ENCODE measurements at regions of chr7 and their contacts with region 1.

Region 1: DNA sequence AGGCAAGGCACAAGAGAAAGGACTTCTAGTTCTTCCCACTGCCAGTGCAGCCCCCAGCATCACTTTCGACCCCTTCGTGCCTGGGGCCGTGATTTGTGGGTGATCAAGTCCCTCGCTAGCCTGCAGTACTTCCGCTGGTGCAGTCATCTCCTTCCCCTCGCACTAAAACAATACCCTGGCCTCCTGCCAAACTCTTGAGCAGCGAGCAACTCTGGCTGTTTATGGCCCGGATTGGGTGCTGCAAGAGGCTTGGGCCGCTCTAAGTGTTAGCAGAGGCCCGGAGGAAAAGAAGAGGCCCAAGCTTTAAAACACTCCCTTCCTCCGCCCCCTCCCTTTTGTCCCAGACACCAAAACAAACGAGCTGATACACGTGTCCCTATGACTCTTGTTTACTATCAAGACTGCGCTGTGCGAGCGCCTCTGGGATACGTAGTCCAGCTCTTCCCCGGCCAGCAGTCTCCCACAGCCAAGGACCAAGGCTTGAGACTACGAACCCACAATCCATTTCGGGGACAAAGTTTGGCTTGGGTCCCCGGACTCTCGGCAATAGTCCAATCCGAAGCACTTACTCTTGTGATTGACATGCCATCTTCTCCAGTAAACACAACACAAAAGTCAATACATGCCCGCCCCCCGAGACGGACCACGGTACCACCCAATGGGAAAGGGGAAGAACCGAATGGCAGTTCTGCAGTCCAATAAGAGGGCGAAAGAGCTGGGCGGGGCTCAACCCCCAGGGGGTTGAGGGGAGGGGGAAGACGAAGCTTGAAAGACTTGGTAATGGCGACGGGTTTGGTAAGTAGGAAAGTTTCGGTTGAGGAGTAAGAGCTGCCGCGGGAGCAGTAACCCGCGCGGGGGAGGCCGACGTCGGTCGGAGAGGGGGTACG is at the start of gene HBP1:
- DNase-seq: peak; percentile 100
- H3K4me3 ChIP-seq: peak within 1 kb of the TSS; percentile 81 to 97 (median 93)
- H3K27ac ChIP-seq: peak within 1 kb of the TSS; percentile 92
- H3K4me1 ChIP-seq: peaks cover 40% of the 10 kb centered on the region
- H3K27me3 ChIP-seq: no peaks in the 10 kb centered on the region
- CTCF ChIP-seq: no peak
- POLR2A ChIP-seq: peak; percentile 53
- total RNA-seq, gene HBP1: 50.1 and 63.4 TPM in 2 replicates

Region 2: GRCh38 chr7:106779877-106780276 is 388.6 kb before region 1 on chr7:
- CTCF ChIA-PET with region 1: interaction called, 3 read pairs
- POLR2A ChIA-PET with region 1: interaction called, 3 read pairs
- dilution Hi-C with region 1: no loop called
- intact Hi-C with region 1: loop called (anchors 1 kb)
- DNase-seq: no peak
- H3K4me3 ChIP-seq: no peak overlapping the region
- H3K27ac ChIP-seq: no peak overlapping the region
- H3K4me1 ChIP-seq: peaks cover 16% of the 10 kb centered on the region
- H3K27me3 ChIP-seq: no peaks in the 10 kb centered on the region
- CTCF ChIP-seq: no peak
- POLR2A ChIP-seq: no peak

Region 3: GRCh38 chr7:107078517-107078966 is 89.9 kb before region 1 on chr7:
- CTCF ChIA-PET with region 1: interaction called, 3 read pairs
- POLR2A ChIA-PET with region 1: no interaction called
- dilution Hi-C with region 1: no loop called
- intact Hi-C with region 1: loop called (anchors 1 kb)
- DNase-seq: peak; percentile 95
- H3K4me3 ChIP-seq: peak overlapping the region in 1 of 3 experiments; percentile 40
- H3K27ac ChIP-seq: peak overlapping the region; percentile 95
- H3K4me1 ChIP-seq: peaks cover 51% of the 10 kb centered on the region
- H3K27me3 ChIP-seq: no peaks in the 10 kb centered on the region
- CTCF ChIP-seq: no peak
- POLR2A ChIP-seq: peak; percentile 39

Region 4: DNA sequence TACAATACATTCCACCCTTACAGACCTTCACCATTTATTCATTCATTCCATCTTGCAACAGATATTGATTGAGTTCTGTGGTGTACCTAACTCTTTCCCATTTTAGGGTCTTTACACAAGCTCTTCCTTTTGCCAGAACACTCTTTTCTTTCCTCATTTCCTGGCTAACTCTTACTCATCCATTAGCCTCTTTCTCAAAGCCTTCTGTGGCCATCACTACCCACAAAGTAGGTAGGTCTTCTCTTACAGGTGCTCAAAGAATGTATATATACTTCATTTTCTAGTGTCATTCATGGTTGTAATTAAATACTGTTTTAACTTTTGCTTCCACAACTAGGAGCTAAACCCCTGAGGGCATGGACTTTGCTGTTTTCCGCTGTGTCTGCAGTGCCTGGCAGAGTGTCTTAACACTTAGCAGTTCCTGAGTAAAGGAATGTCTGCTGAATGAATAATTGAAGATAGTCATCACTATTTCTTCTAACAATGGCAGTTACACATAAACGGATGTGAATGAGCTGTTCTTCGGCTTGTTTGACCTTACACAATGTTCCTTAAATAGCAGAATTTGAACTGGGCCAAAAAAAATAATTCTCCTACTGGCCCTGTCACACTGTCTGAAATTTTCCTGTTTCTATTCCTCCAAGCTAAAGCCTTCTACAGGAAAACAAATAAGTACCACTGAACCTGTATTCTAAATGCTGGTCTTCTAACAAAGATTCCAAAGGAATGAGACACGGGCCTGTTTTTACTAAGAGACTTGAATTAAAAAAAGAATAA is 426.7 kb after region 1 on chr7:
- CTCF ChIA-PET with region 1: no interaction called
- POLR2A ChIA-PET with region 1: interaction called, 3 read pairs
- dilution Hi-C with region 1: no loop called
- intact Hi-C with region 1: loop called (anchors 1 kb)
- DNase-seq: peak; percentile 98
- H3K4me3 ChIP-seq: peak overlapping the region in 1 of 3 experiments; percentile 7
- H3K27ac ChIP-seq: peak overlapping the region; percentile 97
- H3K4me1 ChIP-seq: peaks cover 57% of the 10 kb centered on the region
- H3K27me3 ChIP-seq: no peaks in the 10 kb centered on the region
- CTCF ChIP-seq: no peak
- POLR2A ChIP-seq: no peak

Measured in endothelial cell of umbilical vein (primary cell).